Activated naive CD4-positive, alpha-beta T cell treated with anti-CD3 and anti-CD28 coated beads for 36 hours (primary cell): ENCODE measurements at regions of chr20 and their contacts with region 1.

Region 1: GRCh38 chr20:833450-834150 is at the start of gene FAM110A:
- DNase-seq: peak; percentile 97
- H3K4me3 Mint-ChIP-seq: peak within 1 kb of the TSS; percentile 92
- H3K27ac Mint-ChIP-seq: peak within 1 kb of the TSS; percentile 73
- H3K4me1 Mint-ChIP-seq: peaks cover 37% of the 10 kb centered on the region
- H3K27me3 Mint-ChIP-seq: no peaks in the 10 kb centered on the region
- total RNA-seq, gene FAM110A: 15.4 to 16.2 TPM

Region 2: GRCh38 chr20:543369-544152 is 290.0 kb before region 1 on chr20 and contains the start of gene CSNK2A1:
- CTCF ChIA-PET with region 1: no interaction called
- intact Hi-C with region 1: loop called (anchors 5 kb)
- DNase-seq: peak; percentile 96
- H3K4me3 Mint-ChIP-seq: peak within 1 kb of the TSS; percentile 81
- H3K27ac Mint-ChIP-seq: peak within 1 kb of the TSS; percentile 97
- H3K4me1 Mint-ChIP-seq: peaks cover 49% of the 10 kb centered on the region
- H3K27me3 Mint-ChIP-seq: peaks cover 2% of the 10 kb centered on the region
- total RNA-seq, gene CSNK2A1: 164 to 167 TPM

Region 3: GRCh38 chr20:856361-857040 is 22.9 kb after region 1 on chr20:
- CTCF ChIA-PET with region 1: interaction called, 5 read pairs
- intact Hi-C with region 1: loop called (anchors 1 kb)
- DNase-seq: peak; percentile 64
- H3K4me3 Mint-ChIP-seq: no peak overlapping the region
- H3K27ac Mint-ChIP-seq: no peak overlapping the region
- H3K4me1 Mint-ChIP-seq: peaks cover 58% of the 10 kb centered on the region
- H3K27me3 Mint-ChIP-seq: no peaks in the 10 kb centered on the region

Region 4: GRCh38 chr20:956330-956951 is 122.8 kb after region 1 on chr20:
- CTCF ChIA-PET with region 1: interaction called, 23 read pairs
- intact Hi-C with region 1: no loop called
- DNase-seq: peak; percentile 82
- H3K4me3 Mint-ChIP-seq: no peak overlapping the region
- H3K27ac Mint-ChIP-seq: no peak overlapping the region
- H3K4me1 Mint-ChIP-seq: peaks cover 2% of the 10 kb centered on the region
- H3K27me3 Mint-ChIP-seq: peaks cover 23% of the 10 kb centered on the region

Region 5: GRCh38 chr20:1663917-1664316 is 830.3 kb after region 1 on chr20:
- CTCF ChIA-PET with region 1: no interaction called
- intact Hi-C with region 1: loop called (anchors 10 kb)
- DNase-seq: peak; percentile 69
- H3K4me3 Mint-ChIP-seq: peak overlapping the region; percentile 45
- H3K27ac Mint-ChIP-seq: peak overlapping the region; percentile 98
- H3K4me1 Mint-ChIP-seq: peaks cover 90% of the 10 kb centered on the region
- H3K27me3 Mint-ChIP-seq: no peaks in the 10 kb centered on the region